ENCODE measurements at regions of chr19 and their contacts with region 1.

Region 1: DNA sequence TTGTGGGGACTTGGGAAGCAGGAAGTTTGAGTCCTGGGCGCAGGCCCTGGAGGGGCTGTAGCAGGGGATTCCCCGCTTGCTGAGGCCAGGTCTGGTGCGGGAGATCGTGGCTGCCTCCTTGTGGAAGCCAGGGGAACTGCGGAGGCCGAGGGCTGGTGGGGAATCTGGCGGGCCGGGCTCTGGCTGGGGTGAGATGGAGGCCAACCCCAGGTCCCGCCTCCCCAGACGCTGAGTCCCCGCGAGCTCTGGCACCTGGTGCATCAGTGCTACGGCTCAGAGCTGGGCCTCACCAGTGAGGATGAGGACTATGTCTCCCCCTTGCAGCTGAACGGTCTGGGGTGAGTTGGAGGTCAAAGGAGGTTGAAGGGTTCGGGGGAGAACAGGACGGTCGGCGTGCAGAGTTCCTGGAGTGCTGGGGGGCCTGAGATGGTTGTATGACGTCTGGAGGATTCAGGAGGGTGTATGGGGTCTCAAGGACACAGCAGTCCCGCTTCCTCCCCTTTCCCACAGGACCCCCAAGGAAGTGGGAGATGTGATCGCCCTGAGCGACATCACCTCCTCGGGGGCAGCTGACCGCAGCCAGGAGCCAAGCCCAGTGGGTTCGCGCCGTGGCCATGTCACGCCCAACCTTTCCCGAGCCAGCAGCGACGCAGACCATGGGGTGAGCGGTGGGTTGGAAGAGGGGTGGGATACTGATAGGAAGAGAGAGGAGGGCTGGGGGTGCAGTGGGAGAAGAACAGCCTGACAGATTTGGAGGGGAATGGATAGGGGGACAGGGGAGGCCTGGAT is 13.1 kb downstream of the GRAMD1A start:
- DNase-seq: peak; percentile 89
- ATAC-seq: peak; percentile 92
- H3K4me3 Mint-ChIP-seq: peak overlapping the region; percentile 40
- H3K27ac Mint-ChIP-seq: peak overlapping the region; percentile 74
- H3K4me1 Mint-ChIP-seq: peaks cover 59% of the 10 kb centered on the region
- H3K27me3 Mint-ChIP-seq: no peaks in the 10 kb centered on the region
- CTCF ChIP-seq: peak; percentile 99

Region 2: DNA sequence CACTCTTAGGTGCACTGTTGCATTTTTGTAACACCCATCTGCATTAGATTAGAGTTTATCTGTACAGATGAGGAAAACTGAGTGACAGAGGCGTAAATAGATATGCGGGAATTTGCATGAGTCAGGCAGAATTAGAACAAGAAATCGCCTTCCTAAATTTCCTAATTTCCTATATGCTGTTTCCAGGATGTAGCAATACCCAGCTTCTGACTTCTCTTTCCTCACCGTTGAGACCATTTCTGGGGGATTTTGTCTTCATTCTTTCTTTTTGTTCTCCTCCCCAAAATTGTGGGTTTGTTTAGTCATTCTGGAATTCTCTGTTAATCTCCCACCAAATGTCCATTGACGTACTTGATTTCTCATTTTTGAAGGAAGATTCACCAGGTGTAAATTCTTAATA is 38.6 kb before region 1 on chr19:
- CTCF ChIA-PET with region 1: interaction called, 92 read pairs
- POLR2A ChIA-PET with region 1: interaction called, 8 read pairs
- intact Hi-C with region 1: loop called (anchors 2 kb)
- DNase-seq: no peak
- ATAC-seq: no peak
- H3K4me3 Mint-ChIP-seq: no peak overlapping the region
- H3K27ac Mint-ChIP-seq: no peak overlapping the region
- H3K4me1 Mint-ChIP-seq: peaks cover 24% of the 10 kb centered on the region
- H3K27me3 Mint-ChIP-seq: no peaks in the 10 kb centered on the region
- CTCF ChIP-seq: no peak

Region 3: GRCh38 chr19:34990578-34991192 is 22.5 kb before region 1 on chr19:
- CTCF ChIA-PET with region 1: interaction called, 11 read pairs
- POLR2A ChIA-PET with region 1: interaction called, 7 read pairs
- intact Hi-C with region 1: no loop called
- DNase-seq: peak; percentile 72
- ATAC-seq: peak; percentile 82
- H3K4me3 Mint-ChIP-seq: no peak overlapping the region
- H3K27ac Mint-ChIP-seq: peak overlapping the region; percentile 82
- H3K4me1 Mint-ChIP-seq: peaks cover 37% of the 10 kb centered on the region
- H3K27me3 Mint-ChIP-seq: no peaks in the 10 kb centered on the region
- CTCF ChIP-seq: no peak

Region 4: DNA sequence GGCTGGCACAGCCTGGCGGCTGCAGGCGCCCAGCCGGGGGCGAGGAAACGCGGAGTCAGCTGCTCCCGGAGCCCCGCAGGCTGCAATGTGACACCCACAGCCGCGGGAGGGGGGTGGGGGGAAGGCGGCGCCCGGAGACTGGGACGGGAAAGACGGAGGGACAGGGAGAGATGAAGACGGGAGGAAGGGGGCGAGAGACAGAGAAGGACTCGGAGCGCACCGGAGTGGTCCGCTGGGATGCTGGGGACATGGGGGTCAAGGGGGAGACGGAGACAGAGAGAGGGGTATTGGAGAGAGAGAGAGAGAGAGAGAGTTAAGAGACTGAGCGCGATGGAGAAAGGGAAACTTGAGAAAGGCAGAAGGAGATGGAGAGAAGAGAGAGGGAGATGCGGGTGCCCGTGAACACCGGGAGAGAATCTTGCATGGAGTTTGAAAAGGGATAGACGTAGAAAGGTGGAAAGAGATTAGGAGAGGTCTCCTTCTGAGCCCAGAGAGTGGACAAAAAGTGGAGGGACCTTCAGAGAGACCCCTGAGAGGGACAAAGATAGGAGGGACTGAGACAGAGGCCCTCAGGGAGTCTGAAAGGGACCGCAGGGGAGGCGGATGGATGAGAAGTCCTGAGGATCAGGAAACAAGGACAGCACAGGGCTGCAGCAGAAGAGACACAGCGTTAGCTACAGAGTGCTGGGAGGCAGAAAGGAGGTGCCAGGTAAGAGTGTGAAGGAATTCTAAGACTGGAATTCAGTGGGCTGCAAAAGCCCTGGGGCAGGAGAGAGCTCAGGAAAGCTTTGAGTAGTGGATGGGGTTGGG is 18.1 kb after region 1 on chr19:
- CTCF ChIA-PET with region 1: interaction called, 8 read pairs
- POLR2A ChIA-PET with region 1: interaction called, 25 read pairs
- intact Hi-C with region 1: no loop called
- DNase-seq: no peak
- ATAC-seq: no peak
- H3K4me3 Mint-ChIP-seq: peak overlapping the region; percentile 61
- H3K27ac Mint-ChIP-seq: no peak overlapping the region
- H3K4me1 Mint-ChIP-seq: peaks cover 11% of the 10 kb centered on the region
- H3K27me3 Mint-ChIP-seq: peaks cover 16% of the 10 kb centered on the region
- CTCF ChIP-seq: no peak

Measured in activated CD8-positive, alpha-beta T cell treated with anti-CD3 and anti-CD28 coated beads for 36 hours (primary cell).